Right lobe of liver (tissue), 6 donors: ENCODE measurements at regions of chr17 and their contacts with region 1.

Region 1: DNA sequence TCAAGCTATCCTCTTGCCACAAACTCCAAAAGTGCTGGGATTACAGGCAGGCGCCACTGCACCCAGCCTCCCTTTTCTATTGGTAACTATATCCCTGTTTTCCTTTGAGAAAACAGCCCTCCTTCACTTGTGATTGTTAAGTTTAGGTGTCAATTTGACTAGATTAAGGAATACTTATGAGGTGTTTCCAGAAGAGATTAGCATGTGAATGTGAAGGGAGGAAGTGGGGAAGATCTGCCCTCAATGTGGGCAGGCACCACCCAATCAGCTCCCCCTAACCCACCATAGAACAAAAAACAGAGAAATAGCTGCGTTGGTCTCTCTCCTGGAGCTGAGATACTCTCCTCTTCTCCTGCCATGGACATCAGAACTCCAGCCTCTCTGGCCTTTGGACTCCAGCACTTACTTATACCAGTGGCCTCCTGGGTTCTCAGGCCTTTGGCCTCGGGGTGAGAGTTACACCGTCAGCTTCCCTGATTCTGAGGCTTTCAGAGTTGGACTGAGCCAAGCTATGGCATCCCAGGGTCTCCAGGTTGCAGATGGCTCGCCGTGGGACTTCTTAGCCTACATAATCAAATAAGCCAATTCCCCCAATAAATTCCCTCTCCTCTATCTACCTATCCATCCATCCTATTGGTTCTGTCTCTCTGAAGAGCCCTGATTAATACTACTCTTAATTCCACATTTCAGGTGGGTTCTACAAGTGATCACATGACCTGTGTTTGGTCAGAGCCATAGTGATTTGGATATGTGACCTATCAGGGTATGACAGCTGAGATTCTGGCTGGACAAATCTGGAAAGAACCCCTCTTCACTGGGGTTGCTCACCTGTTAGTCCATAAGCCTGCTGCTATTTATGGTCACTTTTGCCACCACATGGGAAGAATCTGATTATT is 12.0 kb upstream of the STAT3 start:
- DNase-seq: peak in 1 of 3 donors; percentile 49
- ATAC-seq: peak; percentile 41 to 79 (median 50)
- H3K4me3 ChIP-seq: no peak overlapping the region
- H3K27ac ChIP-seq: no peak overlapping the region
- H3K4me1 ChIP-seq: peaks cover 0 to 7% (median 0%) of the 10 kb centered on the region in 4 donors
- H3K27me3 ChIP-seq: no peaks in the 10 kb centered on the region
- CTCF ChIP-seq: no peak
- POLR2A ChIP-seq: no peak

Region 2: DNA sequence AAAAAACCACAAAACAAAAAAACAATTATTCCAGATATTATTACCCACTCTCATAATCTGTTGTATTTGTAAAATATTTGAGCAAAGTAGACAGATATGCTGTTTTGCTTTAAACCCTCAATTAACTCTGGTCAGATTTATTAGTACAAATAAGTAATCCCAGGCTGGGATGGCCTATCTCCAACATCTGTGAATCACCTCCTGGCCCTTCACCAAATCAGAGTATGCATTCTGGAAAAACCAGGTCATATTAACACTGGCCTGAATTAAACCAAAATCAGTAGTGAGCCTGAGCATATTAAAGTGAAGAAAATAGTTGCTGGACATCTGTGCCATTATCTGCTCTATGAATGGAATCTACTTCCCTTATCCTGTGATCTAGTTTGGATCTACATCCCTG is 53.0 kb before region 1 on chr17:
- intact Hi-C with region 1: loop called in 1 of 2 experiments (anchors 10 kb)
- DNase-seq: no peak
- ATAC-seq: peak; percentile 68 to 78 (median 74)
- H3K4me3 ChIP-seq: no peak overlapping the region
- H3K27ac ChIP-seq: peak overlapping the region; percentile 40 to 72 (median 69)
- H3K4me1 ChIP-seq: peaks cover 0 to 44% (median 14%) of the 10 kb centered on the region in 4 donors
- H3K27me3 ChIP-seq: no peaks in the 10 kb centered on the region
- CTCF ChIP-seq: no peak
- POLR2A ChIP-seq: no peak

Region 3: DNA sequence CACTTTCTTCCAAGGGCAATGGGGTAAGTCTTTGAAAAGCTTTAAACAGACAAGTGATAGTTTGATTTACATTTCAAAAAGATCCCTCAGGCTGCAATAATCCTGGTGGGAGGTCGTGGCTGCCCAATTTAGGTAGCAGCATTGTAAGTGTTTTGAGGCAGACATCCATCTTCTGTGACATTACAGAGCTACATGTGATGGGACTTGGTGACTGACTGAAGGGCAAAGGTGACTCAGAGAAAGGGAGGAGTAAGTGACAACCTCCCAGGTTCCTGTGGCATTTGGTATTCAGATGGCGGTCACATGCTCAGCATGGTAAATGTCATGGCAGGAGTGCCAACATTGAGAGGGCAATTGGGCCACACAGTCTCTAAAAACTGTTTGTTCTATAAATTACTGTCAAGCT is 38.4 kb before region 1 on chr17:
- intact Hi-C with region 1: no loop called
- DNase-seq: peak in 1 of 3 donors; percentile 61
- ATAC-seq: peak; percentile 78 to 83 (median 80)
- H3K4me3 ChIP-seq: no peak overlapping the region
- H3K27ac ChIP-seq: peak overlapping the region in 1 of 3 donors; percentile 29
- H3K4me1 ChIP-seq: peaks cover 0 to 34% (median 9%) of the 10 kb centered on the region in 4 donors
- H3K27me3 ChIP-seq: no peaks in the 10 kb centered on the region
- CTCF ChIP-seq: no peak
- POLR2A ChIP-seq: no peak

Region 4: DNA sequence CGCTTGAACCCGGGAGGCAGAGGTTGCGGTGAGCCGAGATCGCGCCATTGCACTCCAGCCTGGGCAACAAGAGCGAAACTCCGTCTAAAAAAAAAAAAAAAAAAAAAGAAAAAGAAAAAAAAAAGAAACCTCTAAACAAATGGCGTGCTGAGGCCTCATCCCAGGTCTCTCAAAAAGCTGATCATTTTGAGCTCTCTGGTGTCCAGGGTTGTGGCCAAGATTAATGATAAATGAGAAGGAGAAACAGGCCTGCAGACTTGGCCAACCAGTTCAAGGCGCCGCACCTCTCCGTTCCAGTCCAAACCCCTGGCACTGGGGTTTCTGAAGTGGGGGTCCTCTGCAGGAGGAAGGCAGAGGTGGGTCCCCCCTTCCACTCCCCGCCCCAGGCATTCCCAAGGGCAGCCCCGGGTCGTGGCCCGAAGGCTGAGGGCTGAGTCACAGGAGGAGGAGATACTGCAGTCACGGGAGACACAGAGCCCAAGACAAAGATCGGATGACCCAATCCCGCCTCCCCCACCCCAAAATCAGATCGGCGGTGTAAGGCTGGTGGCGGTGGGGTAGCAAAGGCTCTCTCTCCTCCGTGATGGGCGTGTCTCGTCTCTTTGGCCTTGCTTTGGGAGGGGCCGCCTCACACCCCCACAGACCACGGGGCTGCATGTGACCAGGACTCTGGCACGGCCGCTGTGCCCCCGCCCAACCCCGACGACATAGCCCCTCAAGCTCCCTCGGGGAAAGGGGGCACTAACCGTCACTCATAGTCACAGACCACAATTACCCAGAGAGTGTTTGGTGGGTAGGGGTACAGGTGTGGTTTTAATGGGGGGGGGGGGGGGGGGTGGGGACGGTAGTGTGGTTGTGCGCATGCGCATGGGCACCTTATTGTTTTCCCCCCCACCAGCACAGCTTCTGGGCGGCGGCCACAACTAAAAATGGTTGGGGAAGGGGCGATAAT is 620.9 kb after region 1 on chr17:
- intact Hi-C with region 1: no loop called
- DNase-seq: peak in 2 of 3 donors; percentile 63 to 68
- ATAC-seq: peak; percentile 1 to 34 (median 2)
- H3K4me3 ChIP-seq: peak overlapping the region; percentile 91 to 100 (median 92)
- H3K27ac ChIP-seq: peak overlapping the region; percentile 58 to 69 (median 68)
- H3K4me1 ChIP-seq: peaks cover 0 to 4% (median 0%) of the 10 kb centered on the region in 4 donors
- H3K27me3 ChIP-seq: no peaks in the 10 kb centered on the region
- CTCF ChIP-seq: no peak
- POLR2A ChIP-seq: no peak